Endothelial cell of umbilical vein (primary cell): ENCODE measurements at regions of chr17 and their contacts with region 1.

Region 1: GRCh38 chr17:49496183-49496866 is 1.2 kb downstream of the NGFR start:
- DNase-seq: peak; percentile 25
- H3K4me3 ChIP-seq: no peak overlapping the region
- H3K27ac ChIP-seq: no peak overlapping the region
- H3K4me1 ChIP-seq: peaks cover 10% of the 10 kb centered on the region
- H3K27me3 ChIP-seq: peaks cover 67 to 70% of the 10 kb centered on the region in 2 experiments
- CTCF ChIP-seq: peak; percentile 79
- POLR2A ChIP-seq: no peak

Region 2: DNA sequence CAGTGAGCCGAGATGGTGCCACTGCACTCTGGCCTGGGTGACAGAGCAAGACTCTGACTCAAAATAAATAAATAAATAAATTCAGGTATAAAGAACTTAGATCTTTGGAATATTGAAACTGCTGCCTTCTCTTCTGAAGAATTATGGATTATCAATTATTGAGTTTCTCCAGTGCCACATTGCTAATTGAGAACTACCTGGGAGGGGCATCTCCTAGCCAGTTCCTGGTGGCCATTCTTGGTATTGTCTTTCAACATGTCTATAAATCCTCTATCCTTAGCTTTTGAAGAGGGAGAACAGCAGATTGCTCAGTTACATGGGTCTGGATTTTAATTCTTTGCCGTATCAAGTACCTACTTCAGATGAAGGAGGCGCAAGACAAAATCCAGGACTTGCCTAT is 636.3 kb before region 1 on chr17:
- CTCF ChIA-PET with region 1: no interaction called
- POLR2A ChIA-PET with region 1: no interaction called
- dilution Hi-C with region 1: no loop called
- intact Hi-C with region 1: no loop called
- DNase-seq: no peak
- H3K4me3 ChIP-seq: no peak overlapping the region
- H3K27ac ChIP-seq: no peak overlapping the region
- H3K4me1 ChIP-seq: no peaks in the 10 kb centered on the region
- H3K27me3 ChIP-seq: no peaks in the 10 kb centered on the region
- CTCF ChIP-seq: no peak
- POLR2A ChIP-seq: no peak

Region 3: DNA sequence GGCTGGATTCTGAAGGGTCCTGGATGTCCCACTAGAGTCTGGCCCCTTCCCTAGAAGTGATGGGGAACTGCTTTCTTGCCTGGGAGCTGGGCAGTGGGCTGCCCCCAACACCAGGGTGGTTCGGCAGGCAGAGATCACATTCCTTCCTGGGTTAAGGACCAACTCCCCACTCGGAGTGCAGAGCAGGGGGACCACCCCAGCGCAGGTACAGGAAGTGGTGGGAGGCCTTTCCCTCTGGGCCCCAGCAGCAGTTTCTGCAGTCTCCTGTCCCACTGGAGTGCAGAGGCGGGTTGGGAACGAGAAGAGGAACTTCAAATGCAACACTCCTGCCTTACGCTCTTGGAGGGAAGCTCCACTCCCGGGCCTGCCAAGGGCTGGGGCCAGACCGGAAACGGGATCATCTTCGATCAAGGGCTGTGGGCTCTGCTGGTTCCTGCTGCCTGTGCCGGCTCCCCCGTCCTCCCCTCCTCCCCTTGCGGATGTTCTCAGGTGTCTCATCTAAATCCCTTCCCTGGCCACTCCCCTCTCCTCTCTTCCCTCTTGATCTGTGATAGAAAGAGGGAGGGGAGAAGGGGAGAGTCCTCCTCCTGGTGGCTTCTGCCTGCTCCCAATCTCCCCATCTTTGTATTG is 10.2 kb before region 1 on chr17:
- CTCF ChIA-PET with region 1: interaction called, 12 read pairs
- POLR2A ChIA-PET with region 1: no interaction called
- dilution Hi-C with region 1: no loop called
- intact Hi-C with region 1: no loop called
- DNase-seq: no peak
- H3K4me3 ChIP-seq: no peak overlapping the region
- H3K27ac ChIP-seq: no peak overlapping the region
- H3K4me1 ChIP-seq: no peaks in the 10 kb centered on the region
- H3K27me3 ChIP-seq: peaks cover 45 to 48% of the 10 kb centered on the region in 2 experiments
- CTCF ChIP-seq: no peak
- POLR2A ChIP-seq: no peak

Region 4: DNA sequence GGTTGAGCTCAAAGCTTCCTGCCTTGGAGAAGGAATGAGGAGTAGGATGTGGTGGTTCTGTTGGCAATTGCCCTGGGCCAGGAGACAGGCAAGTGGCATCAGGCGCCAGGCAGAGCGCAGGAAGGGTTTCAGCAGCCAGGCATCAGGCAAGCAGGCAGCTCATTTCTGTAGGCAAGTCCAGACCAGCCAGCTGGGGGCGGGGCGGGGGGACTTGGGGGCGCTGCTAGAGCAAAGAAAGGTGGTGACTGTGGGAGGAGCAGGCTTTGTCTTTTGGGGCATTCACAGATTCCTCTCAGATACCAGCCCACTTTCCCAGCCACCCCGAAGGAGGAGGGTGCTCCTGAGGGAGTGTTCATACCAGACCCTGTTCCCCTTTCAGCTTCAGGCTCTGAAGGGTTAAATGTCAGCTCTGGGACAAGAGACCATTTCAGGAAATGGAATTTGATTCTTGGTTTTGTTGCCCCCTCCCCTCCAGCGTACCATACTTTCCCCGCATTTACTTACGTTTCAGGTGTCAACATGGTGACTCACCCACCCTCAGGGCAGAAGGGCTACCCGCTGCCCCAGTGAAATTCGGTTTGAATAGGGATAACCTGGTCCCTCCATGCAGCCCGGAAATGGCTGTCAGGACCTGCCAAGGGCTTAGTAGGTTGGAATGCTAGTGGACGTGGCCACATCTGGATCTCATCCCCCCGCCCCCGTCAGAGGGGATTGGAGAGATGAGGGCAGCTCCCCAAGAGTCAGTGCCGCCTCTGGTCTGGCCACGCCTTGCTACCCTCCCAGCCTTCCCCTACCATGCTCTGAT is 11.9 kb after region 1 on chr17:
- CTCF ChIA-PET with region 1: interaction called, 30 read pairs
- POLR2A ChIA-PET with region 1: no interaction called
- dilution Hi-C with region 1: no loop called
- intact Hi-C with region 1: no loop called
- DNase-seq: no peak
- H3K4me3 ChIP-seq: no peak overlapping the region
- H3K27ac ChIP-seq: no peak overlapping the region
- H3K4me1 ChIP-seq: no peaks in the 10 kb centered on the region
- H3K27me3 ChIP-seq: peaks cover 9 to 10% of the 10 kb centered on the region in 2 experiments
- CTCF ChIP-seq: no peak
- POLR2A ChIP-seq: no peak